Natural killer cell (primary cell): ENCODE measurements at regions of chr13 and their contacts with region 1.

Region 1: DNA sequence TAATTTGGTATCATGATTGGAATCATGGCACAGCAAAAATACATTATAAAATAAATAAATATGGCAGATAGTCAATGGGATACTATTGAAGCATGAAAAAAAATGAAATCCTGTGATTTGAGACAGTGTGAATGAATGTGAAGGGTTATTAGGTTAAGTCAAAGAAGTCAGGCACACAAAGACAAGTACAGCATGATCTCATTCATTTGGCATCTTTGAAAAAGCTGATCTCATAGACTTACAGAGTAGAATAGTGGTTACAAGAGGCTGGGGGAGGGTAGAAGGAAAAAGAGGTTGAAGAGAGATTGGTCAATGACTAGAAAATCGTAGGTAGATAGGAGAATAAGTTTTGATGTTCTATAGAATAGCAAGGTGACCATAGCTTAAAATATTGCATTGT is 295.1 kb upstream of the SLITRK5 start:
- DNase-seq: no peak
- ATAC-seq: no peak
- H3K4me3 ChIP-seq: no peak overlapping the region
- H3K4me3 Mint-ChIP-seq: no peak overlapping the region
- H3K27ac ChIP-seq: no peak overlapping the region
- H3K27ac Mint-ChIP-seq: no peak overlapping the region
- H3K4me1 ChIP-seq: no peaks in the 10 kb centered on the region
- H3K4me1 Mint-ChIP-seq: no peaks in the 10 kb centered on the region
- H3K27me3 ChIP-seq: no peaks in the 10 kb centered on the region
- H3K27me3 Mint-ChIP-seq: no peaks in the 10 kb centered on the region
- CTCF ChIP-seq: no peak

Region 2: GRCh38 chr13:86840250-86841191 is 535.6 kb before region 1 on chr13:
- intact Hi-C with region 1: no loop called
- DNase-seq: no peak
- ATAC-seq: no peak
- H3K4me3 ChIP-seq: no peak overlapping the region
- H3K4me3 Mint-ChIP-seq: no peak overlapping the region
- H3K27ac ChIP-seq: no peak overlapping the region
- H3K27ac Mint-ChIP-seq: no peak overlapping the region
- H3K4me1 ChIP-seq: no peaks in the 10 kb centered on the region
- H3K4me1 Mint-ChIP-seq: no peaks in the 10 kb centered on the region
- H3K27me3 ChIP-seq: no peaks in the 10 kb centered on the region
- H3K27me3 Mint-ChIP-seq: no peaks in the 10 kb centered on the region
- CTCF ChIP-seq: no peak

Region 3: DNA sequence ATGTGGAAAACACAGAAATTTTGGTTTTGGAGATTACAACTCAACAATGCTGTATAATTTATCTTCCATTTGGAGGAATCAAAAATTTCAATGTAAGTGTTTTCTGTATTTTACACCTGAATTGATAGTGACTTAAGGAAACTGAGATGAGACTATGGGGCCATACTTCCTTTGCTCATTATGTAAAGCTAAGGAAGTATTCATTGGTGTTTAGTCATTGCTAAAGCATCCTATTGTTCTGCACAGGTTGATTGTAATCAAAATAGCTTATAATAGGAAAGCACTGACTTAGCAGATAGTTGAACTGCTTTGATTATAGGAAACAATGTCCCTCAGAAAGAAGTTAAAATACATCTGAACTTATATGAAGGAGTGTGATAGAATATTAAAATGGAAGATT is 50.7 kb after region 1 on chr13:
- intact Hi-C with region 1: loop called (anchors 2 kb)
- DNase-seq: no peak
- ATAC-seq: no peak
- H3K4me3 ChIP-seq: no peak overlapping the region
- H3K4me3 Mint-ChIP-seq: no peak overlapping the region
- H3K27ac ChIP-seq: no peak overlapping the region
- H3K27ac Mint-ChIP-seq: no peak overlapping the region
- H3K4me1 ChIP-seq: no peaks in the 10 kb centered on the region
- H3K4me1 Mint-ChIP-seq: no peaks in the 10 kb centered on the region
- H3K27me3 ChIP-seq: no peaks in the 10 kb centered on the region
- H3K27me3 Mint-ChIP-seq: no peaks in the 10 kb centered on the region
- CTCF ChIP-seq: no peak